ENCODE measurements at regions of chr4 and their contacts with region 1.

Region 1: DNA sequence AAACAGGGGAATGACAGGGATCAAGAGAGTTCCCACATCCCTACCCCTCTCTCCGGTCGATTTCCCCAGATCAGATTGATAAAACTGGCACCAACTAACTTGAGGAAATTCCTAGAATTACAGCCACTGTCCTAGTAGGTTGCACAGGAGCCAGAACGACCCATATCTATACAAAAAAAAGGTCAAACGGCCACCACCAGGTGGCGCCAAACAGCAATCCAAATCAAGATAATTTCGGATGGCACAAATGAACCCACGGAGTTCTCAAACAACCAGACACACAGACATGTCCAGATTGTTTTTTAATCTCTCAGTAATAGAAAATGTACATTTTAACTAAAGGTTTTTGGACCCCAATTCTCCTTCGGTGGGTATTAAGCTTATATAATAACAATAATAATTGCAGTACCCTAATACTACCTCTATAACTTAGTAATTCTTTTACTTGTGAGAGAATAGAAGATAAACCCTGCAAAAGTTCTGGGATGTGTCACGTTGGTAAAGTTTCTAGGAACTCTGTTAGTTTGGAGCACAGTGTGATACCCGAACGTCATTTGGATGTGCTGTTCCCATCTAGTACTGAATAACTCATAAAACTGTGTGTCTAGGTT is 212.6 kb downstream of the SPOCK3 start:
- DNase-seq: peak; percentile 26 to 90 (median 75)
- H3K4me3 ChIP-seq: no peak overlapping the region
- H3K27ac ChIP-seq: peak overlapping the region in 49 of 59 donors; percentile 2 to 83 (median 60)
- H3K27me3 ChIP-seq: no peaks in the 10 kb centered on the region
- CTCF ChIP-seq: peak; percentile 75 to 97 (median 90)

Region 2: GRCh38 chr4:167100120-167100519 is 78.5 kb after region 1 on chr4:
- intact Hi-C with region 1: loop called in 1 of 2 experiments (anchors 10 kb)
- DNase-seq: no peak
- H3K4me3 ChIP-seq: peak overlapping the region in 27 of 59 donors; percentile 3 to 41 (median 23)
- H3K27ac ChIP-seq: peak overlapping the region in 58 of 59 donors; percentile 19 to 96 (median 86)
- H3K27me3 ChIP-seq: no peaks in the 10 kb centered on the region
- CTCF ChIP-seq: peak in 2 of 56 donors; percentile 2 to 7

Region 3: DNA sequence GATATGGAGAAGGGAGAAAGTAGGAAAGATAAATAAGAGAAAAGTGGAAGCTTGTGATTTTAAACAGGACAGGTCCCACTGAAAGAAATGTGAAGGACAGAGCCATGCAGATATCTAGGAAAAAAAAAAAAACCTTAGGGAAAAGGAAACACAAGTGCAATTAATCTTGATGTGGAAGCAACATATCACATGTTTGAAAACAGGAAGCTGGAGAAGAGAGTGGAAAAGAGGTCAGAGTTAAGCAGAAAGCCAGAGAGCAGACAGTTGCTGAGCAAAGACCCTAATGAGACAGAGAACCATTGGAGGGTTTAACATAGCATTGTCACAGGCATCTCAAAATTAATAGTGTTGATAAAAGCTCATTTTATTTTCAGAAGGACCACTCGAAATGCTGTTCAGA is 123.0 kb after region 1 on chr4:
- intact Hi-C with region 1: loop called in 1 of 2 experiments (anchors 10 kb)
- DNase-seq: no peak
- H3K4me3 ChIP-seq: no peak overlapping the region
- H3K27ac ChIP-seq: no peak overlapping the region
- H3K27me3 ChIP-seq: no peaks in the 10 kb centered on the region
- CTCF ChIP-seq: no peak

Region 4: DNA sequence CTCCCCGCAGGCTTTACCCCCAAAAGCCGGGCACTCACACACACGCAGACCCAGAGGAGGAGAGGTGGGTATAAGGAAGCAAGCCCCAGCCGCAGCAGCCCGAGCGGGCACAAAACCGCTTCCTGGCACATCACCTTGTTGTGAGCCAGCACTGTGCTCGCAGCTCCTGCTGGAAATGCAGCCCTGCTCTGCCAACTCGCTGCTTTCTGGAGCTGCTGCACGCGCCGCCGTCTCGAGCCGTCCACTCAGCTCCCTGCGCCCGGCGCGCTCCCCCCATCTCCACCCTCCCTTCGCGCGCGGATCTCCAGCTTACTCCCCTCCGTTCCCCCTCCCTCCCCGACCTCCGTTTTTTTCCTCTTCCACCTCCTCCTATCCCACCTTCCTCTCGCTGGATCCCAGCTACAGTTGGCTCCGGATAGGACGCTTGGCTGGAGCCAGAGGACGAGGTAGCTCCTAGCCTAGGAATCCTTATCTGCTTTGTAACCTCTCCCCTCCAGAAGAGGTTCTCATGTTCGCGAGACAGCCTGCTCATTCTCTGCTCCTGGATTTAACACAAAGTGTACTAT is 212.7 kb after region 1 on chr4 and contains the start of gene SPOCK3:
- intact Hi-C with region 1: loop called (anchors 5 to 10 kb)
- DNase-seq: peak; percentile 36 to 89 (median 82)
- H3K4me3 ChIP-seq: peak within 1 kb of the TSS; percentile 42 to 87 (median 73)
- H3K27ac ChIP-seq: peak within 1 kb of the TSS; percentile 69 to 97 (median 93)
- H3K27me3 ChIP-seq: peaks cover 0 to 30% (median 0%) of the 10 kb centered on the region in 45 donors
- CTCF ChIP-seq: peak in 6 of 56 donors; percentile 4 to 36 (median 18)
- total RNA-seq, gene SPOCK3: 36.8 to 343 (median 112) TPM

Region 5: GRCh38 chr4:167290678-167291077 is 269.0 kb after region 1 on chr4:
- intact Hi-C with region 1: loop called (anchors 2 to 5 kb)
- DNase-seq: no peak
- H3K4me3 ChIP-seq: no peak overlapping the region
- H3K27ac ChIP-seq: peak overlapping the region in 12 of 59 donors; percentile 4 to 73 (median 32)
- H3K27me3 ChIP-seq: no peaks in the 10 kb centered on the region
- CTCF ChIP-seq: peak; percentile 38 to 87 (median 70)